Caco-2 (cell line): ENCODE measurements at regions of chr12 and their contacts with region 1.

Region 1: GRCh38 chr12:30286345-30286926 is 409.2 kb downstream of the IPO8 start:
- DNase-seq: peak in 1 of 2 experiments; percentile 51
- H3K4me3 ChIP-seq: no peak overlapping the region
- H3K4me3 Mint-ChIP-seq: no peak overlapping the region
- H3K27ac Mint-ChIP-seq: no peak overlapping the region
- H3K4me1 ChIP-seq: no peaks in the 10 kb centered on the region
- H3K4me1 Mint-ChIP-seq: no peaks in the 10 kb centered on the region
- H3K27me3 ChIP-seq: no peaks in the 10 kb centered on the region
- H3K27me3 Mint-ChIP-seq: peaks cover 2% of the 10 kb centered on the region
- CTCF ChIP-seq: peak; percentile 77

Region 2: DNA sequence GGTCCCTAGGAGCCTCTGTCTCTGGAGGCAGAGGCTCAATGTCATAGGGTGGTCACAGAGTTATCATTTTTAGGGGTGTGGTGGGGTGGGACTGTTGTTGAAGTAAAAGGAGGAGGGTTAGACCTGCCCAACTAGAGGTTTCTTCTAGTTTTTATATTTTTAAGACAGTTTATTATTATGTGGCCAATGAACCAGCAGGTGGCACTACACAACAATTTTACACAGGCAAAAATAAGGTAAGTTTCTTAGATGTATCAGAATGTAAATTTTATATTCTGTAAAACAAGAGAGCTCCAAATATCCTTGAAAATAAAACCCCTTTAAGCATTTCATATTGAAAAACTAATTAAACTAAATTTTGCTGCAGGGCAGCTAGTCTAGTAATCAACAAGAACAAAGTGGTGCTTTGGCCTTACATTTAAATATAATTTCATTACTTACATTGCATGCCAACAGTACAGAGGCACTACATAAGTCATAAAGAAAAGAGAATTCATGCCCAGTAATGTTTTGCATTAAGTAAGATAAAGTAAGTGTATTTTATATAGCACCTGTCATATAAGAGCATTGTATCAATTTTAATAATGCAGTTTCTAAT is 766.8 kb before region 1 on chr12:
- CTCF ChIA-PET with region 1: no interaction called
- POLR2A ChIA-PET with region 1: no interaction called
- intact Hi-C with region 1: loop called (anchors 1 kb)
- DNase-seq: peak in 1 of 2 experiments; percentile 43
- H3K4me3 ChIP-seq: no peak overlapping the region
- H3K4me3 Mint-ChIP-seq: no peak overlapping the region
- H3K27ac Mint-ChIP-seq: no peak overlapping the region
- H3K4me1 ChIP-seq: no peaks in the 10 kb centered on the region
- H3K4me1 Mint-ChIP-seq: no peaks in the 10 kb centered on the region
- H3K27me3 ChIP-seq: no peaks in the 10 kb centered on the region
- H3K27me3 Mint-ChIP-seq: peaks cover 12% of the 10 kb centered on the region
- CTCF ChIP-seq: peak; percentile 64 to 70

Region 3: GRCh38 chr12:29921307-29921706 is 365.1 kb before region 1 on chr12:
- CTCF ChIA-PET with region 1: no interaction called
- POLR2A ChIA-PET with region 1: no interaction called
- intact Hi-C with region 1: loop called (anchors 10 kb)
- DNase-seq: no peak
- H3K4me3 ChIP-seq: no peak overlapping the region
- H3K4me3 Mint-ChIP-seq: no peak overlapping the region
- H3K27ac Mint-ChIP-seq: no peak overlapping the region
- H3K4me1 ChIP-seq: 0 out of 2 replicates have a peak, but pooled peaks cover 7% of the 10 kb centered on the region
- H3K4me1 Mint-ChIP-seq: no peaks in the 10 kb centered on the region
- H3K27me3 ChIP-seq: no peaks in the 10 kb centered on the region
- H3K27me3 Mint-ChIP-seq: no peaks in the 10 kb centered on the region
- CTCF ChIP-seq: no peak

Region 4: GRCh38 chr12:30047499-30048262 is 238.8 kb before region 1 on chr12:
- CTCF ChIA-PET with region 1: no interaction called
- POLR2A ChIA-PET with region 1: no interaction called
- intact Hi-C with region 1: loop called (anchors 10 kb)
- DNase-seq: no peak
- H3K4me3 ChIP-seq: no peak overlapping the region
- H3K4me3 Mint-ChIP-seq: no peak overlapping the region
- H3K27ac Mint-ChIP-seq: no peak overlapping the region
- H3K4me1 ChIP-seq: no peaks in the 10 kb centered on the region
- H3K4me1 Mint-ChIP-seq: no peaks in the 10 kb centered on the region
- H3K27me3 ChIP-seq: no peaks in the 10 kb centered on the region
- H3K27me3 Mint-ChIP-seq: peaks cover 11% of the 10 kb centered on the region
- CTCF ChIP-seq: no peak

Region 5: GRCh38 chr12:30134229-30134628 is 152.2 kb before region 1 on chr12:
- CTCF ChIA-PET with region 1: no interaction called
- POLR2A ChIA-PET with region 1: no interaction called
- intact Hi-C with region 1: loop called (anchors 2 kb)
- DNase-seq: peak in 1 of 2 experiments; percentile 50
- H3K4me3 ChIP-seq: no peak overlapping the region
- H3K4me3 Mint-ChIP-seq: no peak overlapping the region
- H3K27ac Mint-ChIP-seq: no peak overlapping the region
- H3K4me1 ChIP-seq: 0 out of 2 replicates have a peak, but pooled peaks cover 3% of the 10 kb centered on the region
- H3K4me1 Mint-ChIP-seq: no peaks in the 10 kb centered on the region
- H3K27me3 ChIP-seq: no peaks in the 10 kb centered on the region
- H3K27me3 Mint-ChIP-seq: no peaks in the 10 kb centered on the region
- CTCF ChIP-seq: peak; percentile 48 to 74

Region 6: GRCh38 chr12:30806989-30807694 is 520.7 kb after region 1 on chr12:
- CTCF ChIA-PET with region 1: no interaction called
- POLR2A ChIA-PET with region 1: no interaction called
- intact Hi-C with region 1: loop called (anchors 10 kb)
- DNase-seq: peak in 1 of 2 experiments; percentile 74
- H3K4me3 ChIP-seq: no peak overlapping the region
- H3K4me3 Mint-ChIP-seq: no peak overlapping the region
- H3K27ac Mint-ChIP-seq: no peak overlapping the region
- H3K4me1 ChIP-seq: no peaks in the 10 kb centered on the region
- H3K4me1 Mint-ChIP-seq: no peaks in the 10 kb centered on the region
- H3K27me3 ChIP-seq: no peaks in the 10 kb centered on the region
- H3K27me3 Mint-ChIP-seq: peaks cover 6% of the 10 kb centered on the region
- CTCF ChIP-seq: peak; percentile 80 to 94